Cardiac septum (tissue), 1 donor: ENCODE measurements at regions of chr7 and their contacts with region 1.

Region 1: GRCh38 chr7:83410989-83411591 is 237.8 kb downstream of the SEMA3E start:
- DNase-seq: no peak

Region 2: GRCh38 chr7:83648464-83649241 is 237.6 kb after region 1 on chr7 and contains the start of gene SEMA3E:
- intact Hi-C with region 1: loop called (anchors 5 kb)
- DNase-seq: no peak
- total RNA-seq, gene SEMA3E: 0.70 TPM